K562 (cell line): ENCODE measurements at regions of chr16 and their contacts with region 1.

Region 1: DNA sequence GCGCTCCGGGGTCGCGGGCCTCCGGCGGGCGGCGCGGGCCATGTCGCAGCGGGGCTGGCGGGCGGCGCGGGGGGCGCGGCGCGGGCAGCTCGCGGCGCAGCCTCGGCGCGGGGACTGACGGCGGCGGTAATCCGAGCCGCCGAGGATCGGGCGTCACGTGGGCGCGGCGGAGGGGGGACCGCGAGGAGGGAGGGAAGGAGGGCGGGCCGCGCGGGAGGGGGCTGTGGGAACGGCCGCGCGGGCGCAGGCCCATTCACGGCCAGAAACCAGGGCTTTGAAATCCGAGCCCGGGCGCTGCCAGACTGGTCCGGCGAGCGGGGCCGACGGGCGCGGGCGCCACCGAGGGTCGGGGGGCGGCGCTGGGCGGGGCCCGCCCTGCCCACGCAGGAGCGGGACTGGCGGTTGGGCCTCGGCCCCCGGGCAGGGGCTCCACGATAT is at the start of gene MTSS2:
- DNase-seq: peak; percentile 91 to 95 (median 94)
- ATAC-seq: peak; percentile 85
- H3K4me3 ChIP-seq: peak within 1 kb of the TSS; percentile 86
- H3K27ac ChIP-seq: peak within 1 kb of the TSS; percentile 82
- H3K4me1 ChIP-seq: peaks cover 15 to 86% of the 10 kb centered on the region in 2 experiments
- H3K27me3 ChIP-seq: no peaks in the 10 kb centered on the region
- CTCF ChIP-seq: no peak
- EP300 ChIP-seq: no peak
- POLR2A ChIP-seq: no peak
- RAD21 ChIP-seq: no peak
- polyA plus RNA-seq, gene MTSS2: 0.11 to 0.32 TPM

Region 2: DNA sequence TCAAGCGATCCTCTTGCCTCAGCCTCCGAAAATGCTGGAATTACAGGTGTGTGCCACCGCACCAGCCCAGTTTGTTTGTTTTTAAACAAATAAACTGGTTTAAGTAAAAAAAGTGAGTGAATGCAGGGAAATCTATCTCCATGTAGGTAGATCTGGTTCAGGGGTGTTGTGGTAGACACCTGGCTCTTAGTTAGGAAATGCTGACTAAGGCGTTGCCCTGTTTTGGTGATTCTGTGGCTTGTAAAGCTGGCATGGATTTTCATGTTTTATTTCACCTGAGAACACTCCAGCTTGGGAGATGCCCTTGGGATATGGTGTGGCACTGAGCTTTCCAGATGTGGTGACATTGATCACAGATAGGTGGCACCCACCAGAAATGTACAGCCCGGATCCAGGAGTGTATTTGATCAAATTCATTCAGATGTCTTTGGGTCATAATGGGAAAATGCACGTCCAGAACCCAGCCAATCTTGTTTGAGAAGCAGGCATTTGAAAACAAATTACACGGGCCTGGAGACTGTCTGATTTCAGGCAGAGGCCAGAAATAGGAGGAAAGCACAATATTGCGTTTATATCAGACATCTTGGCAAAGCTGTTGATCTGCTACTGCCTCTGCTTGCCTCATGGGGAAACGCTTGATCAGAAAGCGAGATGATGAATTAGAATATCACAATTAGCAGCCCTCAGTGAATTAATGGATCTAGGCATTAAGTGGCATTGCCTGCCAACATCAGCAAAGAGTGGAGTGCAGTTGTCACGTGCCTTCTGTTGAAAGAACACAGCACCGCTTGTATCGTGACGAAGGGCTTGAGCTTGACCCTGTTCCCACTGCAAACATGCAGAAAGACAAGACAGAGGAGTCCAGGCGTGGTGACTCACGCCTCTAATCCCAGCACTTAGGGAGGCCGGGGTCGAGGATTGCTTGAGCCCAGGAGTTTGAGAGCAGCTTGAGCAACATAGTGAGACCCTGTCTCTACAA is 46.9 kb before region 1 on chr16:
- CTCF ChIA-PET with region 1: no interaction called
- POLR2A ChIA-PET with region 1: no interaction called
- in situ Hi-C with region 1: no loop called
- intact Hi-C with region 1: no loop called
- DNase-seq: no peak
- ATAC-seq: peak; percentile 53; the same call in 2 of the 3 replicates
- H3K4me3 ChIP-seq: no peak overlapping the region
- H3K27ac ChIP-seq: no peak overlapping the region
- H3K4me1 ChIP-seq: no peaks in the 10 kb centered on the region
- H3K27me3 ChIP-seq: peaks cover 3 to 27% of the 10 kb centered on the region in 2 experiments; a peak in 4 of 5 replicates
- CTCF ChIP-seq: no peak
- EP300 ChIP-seq: no peak
- POLR2A ChIP-seq: no peak
- RAD21 ChIP-seq: no peak

Region 3: DNA sequence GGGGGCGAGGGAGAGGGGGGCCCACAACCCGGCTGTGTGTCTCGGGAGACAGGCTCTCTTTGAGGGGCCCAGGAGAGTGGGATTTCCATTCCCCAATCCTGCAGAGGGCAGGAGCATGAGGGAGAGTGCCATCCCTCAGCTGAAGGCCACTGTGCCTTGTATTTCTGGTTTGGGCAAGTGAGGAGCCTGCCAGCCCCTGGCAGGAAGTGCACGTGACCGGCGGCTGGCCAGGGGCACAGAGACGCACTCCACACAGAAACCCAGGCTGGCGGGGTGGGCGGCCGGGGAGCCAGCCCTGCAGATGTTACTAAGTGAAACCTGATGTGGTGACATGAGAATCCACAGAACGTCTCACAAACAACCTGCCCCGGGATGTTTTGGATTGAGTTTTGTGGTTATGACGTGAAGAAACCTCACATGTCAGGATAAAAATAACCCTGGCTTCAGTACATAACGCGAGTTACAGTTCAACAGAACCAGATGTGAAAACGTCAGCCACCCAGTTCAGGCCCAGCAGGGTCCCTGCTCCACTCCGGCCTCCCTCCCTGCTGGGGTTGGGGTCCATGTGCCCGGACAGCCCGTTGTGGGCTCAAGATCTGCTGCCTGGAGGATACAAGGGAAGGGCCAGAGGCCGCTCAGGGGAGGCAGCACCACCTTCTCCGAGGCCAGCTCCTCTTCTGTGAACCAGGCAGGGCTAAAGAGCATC is 51.6 kb after region 1 on chr16:
- CTCF ChIA-PET with region 1: no interaction called
- POLR2A ChIA-PET with region 1: interaction called, 3 read pairs
- in situ Hi-C with region 1: no loop called
- intact Hi-C with region 1: loop called (anchors 5 kb)
- DNase-seq: no peak
- ATAC-seq: no peak
- H3K4me3 ChIP-seq: no peak overlapping the region
- H3K27ac ChIP-seq: no peak overlapping the region
- H3K4me1 ChIP-seq: peaks cover 0 to 26% of the 10 kb centered on the region in 2 experiments; a peak in 2 of 5 replicates
- H3K27me3 ChIP-seq: no peaks in the 10 kb centered on the region
- CTCF ChIP-seq: no peak
- EP300 ChIP-seq: no peak
- POLR2A ChIP-seq: no peak
- RAD21 ChIP-seq: no peak

Region 4: GRCh38 chr16:71637398-71637797 is 951.4 kb after region 1 on chr16:
- CTCF ChIA-PET with region 1: no interaction called
- POLR2A ChIA-PET with region 1: no interaction called
- in situ Hi-C with region 1: no loop called
- intact Hi-C with region 1: no loop called
- DNase-seq: no peak
- ATAC-seq: no peak
- H3K4me3 ChIP-seq: no peak overlapping the region
- H3K27ac ChIP-seq: no peak overlapping the region
- H3K4me1 ChIP-seq: no peaks in the 10 kb centered on the region
- H3K27me3 ChIP-seq: peaks cover 22 to 33% of the 10 kb centered on the region in 2 experiments
- CTCF ChIP-seq: no peak
- EP300 ChIP-seq: no peak
- POLR2A ChIP-seq: no peak
- RAD21 ChIP-seq: no peak